Lower leg skin (tissue), 4 donors: ENCODE measurements at regions of chr2 and their contacts with region 1.

Region 1: GRCh38 chr2:20398956-20399567 is 47.8 kb upstream of the RHOB start:
- DNase-seq: peak in 1 of 2 donors; percentile 74
- H3K4me3 ChIP-seq: no peak overlapping the region
- CTCF ChIP-seq: no peak
- POLR2A ChIP-seq: no peak

Region 2: GRCh38 chr2:20411361-20411894 is 12.4 kb after region 1 on chr2:
- intact Hi-C with region 1: no loop called
- DNase-seq: peak; percentile 89 to 98
- H3K4me3 ChIP-seq: no peak overlapping the region
- CTCF ChIP-seq: peak in 1 of 3 donors; percentile 78
- POLR2A ChIP-seq: no peak

Region 3: GRCh38 chr2:20649591-20650375 is 250.7 kb after region 1 on chr2:
- intact Hi-C with region 1: loop called (anchors 5 kb)
- DNase-seq: no peak
- H3K4me3 ChIP-seq: peak overlapping the region; percentile 65
- CTCF ChIP-seq: no peak
- POLR2A ChIP-seq: no peak